Activated CD4-positive, alpha-beta T cell treated with anti-CD3 and anti-CD28 coated beads for 36 hours (primary cell): ENCODE measurements at regions of chr22 and their contacts with region 1.

Region 1: DNA sequence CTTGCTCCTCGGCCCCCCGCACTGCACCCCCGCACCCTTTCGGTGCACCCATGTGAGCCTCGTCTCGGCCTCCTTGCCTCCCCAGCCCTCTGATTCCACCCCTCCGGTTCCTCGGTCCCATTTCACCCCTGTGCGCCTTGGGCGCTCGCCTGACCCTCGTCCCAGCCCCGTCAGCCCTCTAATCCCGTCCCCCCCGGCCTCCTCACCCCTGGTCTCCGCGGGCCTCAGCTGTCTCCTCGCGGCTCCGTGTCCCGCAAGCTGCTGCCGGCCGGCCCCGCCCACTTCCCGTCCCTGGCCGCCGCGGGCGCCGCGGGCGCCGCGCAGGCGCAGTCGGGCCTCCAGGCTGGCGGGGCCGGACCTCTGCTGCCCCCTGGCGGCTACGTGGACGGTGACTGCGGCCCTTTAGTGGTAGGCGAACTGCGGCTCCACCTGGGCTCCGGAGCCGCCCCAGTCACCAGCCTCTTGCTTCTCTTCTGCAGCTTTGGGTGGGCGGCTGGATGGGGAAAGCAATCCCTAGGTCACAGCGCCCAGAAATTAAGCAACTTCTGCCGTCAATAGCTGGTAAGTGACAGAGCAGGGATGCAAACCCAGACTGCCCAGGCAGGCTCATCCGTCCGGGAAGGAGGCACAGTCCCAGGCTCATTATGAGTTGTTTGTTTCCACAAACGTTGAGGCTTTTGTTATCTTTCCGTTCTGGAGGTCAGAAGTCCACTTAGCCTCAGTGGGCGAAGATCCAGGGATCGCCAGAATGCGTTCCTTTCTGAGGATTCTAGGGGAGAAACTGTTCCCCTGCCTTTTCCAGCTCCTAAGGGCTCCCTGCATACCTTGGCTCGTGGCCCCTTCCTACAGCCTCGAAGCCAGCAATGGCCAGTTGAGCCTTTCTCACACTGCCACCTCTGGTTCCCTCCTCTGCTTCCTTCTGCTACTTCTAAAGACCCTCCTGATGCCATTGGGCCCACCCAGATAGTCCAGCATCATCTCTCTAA is at the start of gene PPM1F:
- DNase-seq: peak; percentile 95
- ATAC-seq: peak; percentile 91
- H3K4me3 Mint-ChIP-seq: peak within 1 kb of the TSS; percentile 78
- H3K27ac Mint-ChIP-seq: peak within 1 kb of the TSS; percentile 70
- H3K4me1 Mint-ChIP-seq: peaks cover 11% of the 10 kb centered on the region
- H3K27me3 Mint-ChIP-seq: no peaks in the 10 kb centered on the region
- total RNA-seq, gene PPM1F: 23.6 to 27.7 TPM

Region 2: GRCh38 chr22:21657361-21658032 is 295.4 kb before region 1 on chr22:
- CTCF ChIA-PET with region 1: interaction called, 3 read pairs
- POLR2A ChIA-PET with region 1: no interaction called
- intact Hi-C with region 1: loop called in 1 of 2 experiments (anchors 2 kb)
- DNase-seq: peak; percentile 88
- ATAC-seq: peak; percentile 92
- H3K4me3 Mint-ChIP-seq: peak overlapping the region; percentile 76
- H3K27ac Mint-ChIP-seq: peak overlapping the region; percentile 31
- H3K4me1 Mint-ChIP-seq: peaks cover 13% of the 10 kb centered on the region
- H3K27me3 Mint-ChIP-seq: no peaks in the 10 kb centered on the region

Region 3: GRCh38 chr22:21712894-21713712 is 239.8 kb before region 1 on chr22:
- CTCF ChIA-PET with region 1: interaction called, 8 read pairs
- POLR2A ChIA-PET with region 1: no interaction called
- intact Hi-C with region 1: loop called (anchors 2 kb)
- DNase-seq: peak; percentile 71
- ATAC-seq: peak; percentile 96
- H3K4me3 Mint-ChIP-seq: no peak overlapping the region
- H3K27ac Mint-ChIP-seq: no peak overlapping the region
- H3K4me1 Mint-ChIP-seq: peaks cover 10% of the 10 kb centered on the region
- H3K27me3 Mint-ChIP-seq: no peaks in the 10 kb centered on the region

Region 4: GRCh38 chr22:21760640-21761039 is 192.2 kb before region 1 on chr22:
- CTCF ChIA-PET with region 1: no interaction called
- POLR2A ChIA-PET with region 1: no interaction called
- intact Hi-C with region 1: loop called in 1 of 2 experiments (anchors 5 kb)
- DNase-seq: no peak
- ATAC-seq: no peak
- H3K4me3 Mint-ChIP-seq: no peak overlapping the region
- H3K27ac Mint-ChIP-seq: no peak overlapping the region
- H3K4me1 Mint-ChIP-seq: peaks cover 50% of the 10 kb centered on the region
- H3K27me3 Mint-ChIP-seq: no peaks in the 10 kb centered on the region

Region 5: GRCh38 chr22:21972293-21972779 is 19.5 kb after region 1 on chr22:
- CTCF ChIA-PET with region 1: interaction called, 10 read pairs
- POLR2A ChIA-PET with region 1: no interaction called
- intact Hi-C with region 1: no loop called
- DNase-seq: peak; percentile 72
- ATAC-seq: peak; percentile 63
- H3K4me3 Mint-ChIP-seq: no peak overlapping the region
- H3K27ac Mint-ChIP-seq: no peak overlapping the region
- H3K4me1 Mint-ChIP-seq: no peaks in the 10 kb centered on the region
- H3K27me3 Mint-ChIP-seq: no peaks in the 10 kb centered on the region